ENCODE measurements at regions of chr2 and their contacts with region 1.

Region 1: DNA sequence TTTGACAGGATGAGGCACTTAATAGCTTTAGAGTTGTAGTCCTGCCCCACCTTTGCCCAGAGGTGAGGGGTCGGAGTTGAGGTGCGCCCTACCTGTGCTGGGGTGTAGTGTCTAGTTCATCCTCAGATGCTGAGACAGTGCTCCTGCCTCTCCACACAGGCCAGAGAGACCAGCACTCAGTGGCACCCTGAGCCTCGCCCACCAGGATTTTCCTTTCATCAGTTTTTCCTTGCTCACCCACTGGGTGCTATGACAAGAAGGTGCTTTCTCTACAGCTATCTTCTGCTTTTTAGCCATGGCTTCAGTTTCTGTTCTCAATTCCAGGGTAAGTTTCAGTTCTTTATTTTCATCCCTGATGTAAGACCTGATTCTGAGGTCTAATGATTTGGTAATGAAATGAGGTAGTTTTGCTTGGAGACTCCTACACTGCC is 16.8 kb upstream of the TMEM131 start:
- DNase-seq: no peak
- H3K4me3 Mint-ChIP-seq: no peak overlapping the region
- H3K27ac Mint-ChIP-seq: peak overlapping the region; percentile 71
- H3K4me1 Mint-ChIP-seq: peaks cover 30% of the 10 kb centered on the region
- H3K27me3 Mint-ChIP-seq: no peaks in the 10 kb centered on the region

Region 2: DNA sequence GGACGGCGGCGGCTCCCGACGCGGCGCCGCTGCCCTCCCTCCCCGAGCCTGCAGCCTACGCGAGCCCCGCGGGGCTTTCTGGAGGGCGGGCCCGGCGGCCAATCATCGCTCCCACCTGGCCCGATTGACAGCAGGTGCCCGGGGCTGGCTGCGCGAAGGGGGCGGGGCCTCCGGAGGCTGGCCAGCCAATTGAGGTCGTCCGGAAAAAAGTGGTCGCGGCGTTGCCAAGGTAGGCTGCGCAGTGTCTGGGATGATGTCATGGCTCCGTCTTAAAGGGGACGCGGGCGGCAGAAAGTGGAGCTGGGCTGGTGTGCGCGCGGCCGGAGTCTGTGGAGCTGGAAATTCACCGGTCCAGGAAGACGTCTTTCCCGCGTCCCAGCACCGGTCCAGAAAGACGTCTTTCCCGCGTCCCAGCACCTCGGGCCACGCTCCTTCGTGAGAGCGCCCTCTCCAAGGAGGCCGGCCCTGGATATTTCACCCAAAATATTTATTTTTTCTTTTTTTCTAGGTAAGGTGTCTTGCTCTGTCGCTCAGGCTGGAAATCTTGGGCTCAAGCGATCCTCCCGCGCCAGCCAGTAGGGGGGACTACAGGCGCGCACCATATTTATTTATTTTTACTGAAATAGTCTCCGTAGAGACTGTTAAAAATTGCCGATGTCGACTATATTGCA is 348.5 kb before region 1 on chr2 and contains the start of gene ACTR1B:
- intact Hi-C with region 1: loop called (anchors 5 kb)
- DNase-seq: peak; percentile 98
- H3K4me3 Mint-ChIP-seq: peak within 1 kb of the TSS; percentile 92
- H3K27ac Mint-ChIP-seq: peak within 1 kb of the TSS; percentile 98
- H3K4me1 Mint-ChIP-seq: peaks cover 30% of the 10 kb centered on the region
- H3K27me3 Mint-ChIP-seq: no peaks in the 10 kb centered on the region
- total RNA-seq, gene ACTR1B: 142 and 147 TPM in 2 replicates

Region 3: GRCh38 chr2:97849881-97850528 is 162.6 kb before region 1 on chr2:
- intact Hi-C with region 1: loop called (anchors 1 kb)
- DNase-seq: no peak
- H3K4me3 Mint-ChIP-seq: peak overlapping the region; percentile 20
- H3K27ac Mint-ChIP-seq: peak overlapping the region; percentile 75
- H3K4me1 Mint-ChIP-seq: peaks cover 51% of the 10 kb centered on the region
- H3K27me3 Mint-ChIP-seq: no peaks in the 10 kb centered on the region

Region 4: GRCh38 chr2:97911206-97911921 is 101.2 kb before region 1 on chr2:
- intact Hi-C with region 1: loop called (anchors 1 kb)
- DNase-seq: no peak
- H3K4me3 Mint-ChIP-seq: no peak overlapping the region
- H3K27ac Mint-ChIP-seq: peak overlapping the region; percentile 22
- H3K4me1 Mint-ChIP-seq: peaks cover 61% of the 10 kb centered on the region
- H3K27me3 Mint-ChIP-seq: no peaks in the 10 kb centered on the region

Region 5: GRCh38 chr2:97995734-97996624 is 16.6 kb before region 1 on chr2 and contains the start of gene TMEM131:
- intact Hi-C with region 1: loop called (anchors 1 kb)
- DNase-seq: peak; percentile 95
- H3K4me3 Mint-ChIP-seq: peak within 1 kb of the TSS; percentile 96
- H3K27ac Mint-ChIP-seq: peak within 1 kb of the TSS; percentile 96
- H3K4me1 Mint-ChIP-seq: peaks cover 30% of the 10 kb centered on the region
- H3K27me3 Mint-ChIP-seq: peaks cover 8% of the 10 kb centered on the region
- total RNA-seq, gene TMEM131: 39.3 and 39.9 TPM in 2 replicates

Region 6: GRCh38 chr2:98086491-98087446 is 74.2 kb after region 1 on chr2 and contains the start of gene VWA3B:
- intact Hi-C with region 1: loop called (anchors 10 kb)
- DNase-seq: peak; percentile 56
- H3K4me3 Mint-ChIP-seq: peak within 1 kb of the TSS; percentile 73
- H3K27ac Mint-ChIP-seq: no peak within 1 kb of the TSS
- H3K4me1 Mint-ChIP-seq: peaks cover 24% of the 10 kb centered on the region
- H3K27me3 Mint-ChIP-seq: peaks cover 44% of the 10 kb centered on the region
- total RNA-seq, gene VWA3B: not detected in 2 replicates

Region 7: DNA sequence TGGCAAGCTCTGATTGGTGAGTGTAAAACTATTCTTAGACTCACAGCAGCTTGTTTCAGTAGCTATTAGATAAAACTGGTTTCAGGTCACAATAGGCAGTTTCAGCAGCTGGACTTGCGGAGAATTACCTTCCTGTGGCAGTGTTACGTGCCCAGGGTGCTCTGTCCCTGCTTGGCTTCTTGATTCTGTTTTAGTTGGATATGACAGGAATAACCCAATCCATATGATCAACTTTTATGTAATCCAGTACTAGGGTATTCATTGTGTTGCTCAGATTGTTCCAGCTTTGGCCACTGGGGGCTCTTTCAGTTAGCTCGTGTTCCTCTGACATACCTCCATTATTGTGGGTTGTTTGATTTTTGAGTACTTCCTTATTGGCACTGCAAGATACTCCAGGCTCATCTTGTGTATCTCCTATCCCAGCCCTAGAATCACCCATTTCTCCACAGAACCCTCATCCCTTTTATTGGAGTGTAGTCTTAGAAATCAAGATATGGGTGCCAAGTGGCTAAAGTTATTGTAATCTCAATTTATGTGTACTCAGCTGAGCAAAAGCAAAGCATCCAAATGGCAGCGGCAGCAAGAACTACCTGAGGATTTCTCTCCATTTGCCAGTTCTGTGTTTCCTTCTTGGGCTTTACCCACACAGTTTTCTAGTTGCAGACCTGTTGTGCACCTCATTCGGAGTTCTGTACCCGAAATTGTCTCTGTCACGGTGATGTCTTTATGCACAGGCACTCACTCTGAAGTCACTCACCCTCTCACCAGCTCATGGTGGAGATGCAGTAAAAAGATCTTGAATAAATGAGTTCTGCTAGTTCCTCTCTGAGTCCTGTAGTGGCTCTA is 475.5 kb after region 1 on chr2:
- intact Hi-C with region 1: no loop called
- DNase-seq: no peak
- H3K4me3 Mint-ChIP-seq: no peak overlapping the region
- H3K27ac Mint-ChIP-seq: no peak overlapping the region
- H3K4me1 Mint-ChIP-seq: peaks cover 62% of the 10 kb centered on the region
- H3K27me3 Mint-ChIP-seq: no peaks in the 10 kb centered on the region